Right lobe of liver (tissue), 6 donors: ENCODE measurements at regions of chr11 and their contacts with region 1.

Region 1: DNA sequence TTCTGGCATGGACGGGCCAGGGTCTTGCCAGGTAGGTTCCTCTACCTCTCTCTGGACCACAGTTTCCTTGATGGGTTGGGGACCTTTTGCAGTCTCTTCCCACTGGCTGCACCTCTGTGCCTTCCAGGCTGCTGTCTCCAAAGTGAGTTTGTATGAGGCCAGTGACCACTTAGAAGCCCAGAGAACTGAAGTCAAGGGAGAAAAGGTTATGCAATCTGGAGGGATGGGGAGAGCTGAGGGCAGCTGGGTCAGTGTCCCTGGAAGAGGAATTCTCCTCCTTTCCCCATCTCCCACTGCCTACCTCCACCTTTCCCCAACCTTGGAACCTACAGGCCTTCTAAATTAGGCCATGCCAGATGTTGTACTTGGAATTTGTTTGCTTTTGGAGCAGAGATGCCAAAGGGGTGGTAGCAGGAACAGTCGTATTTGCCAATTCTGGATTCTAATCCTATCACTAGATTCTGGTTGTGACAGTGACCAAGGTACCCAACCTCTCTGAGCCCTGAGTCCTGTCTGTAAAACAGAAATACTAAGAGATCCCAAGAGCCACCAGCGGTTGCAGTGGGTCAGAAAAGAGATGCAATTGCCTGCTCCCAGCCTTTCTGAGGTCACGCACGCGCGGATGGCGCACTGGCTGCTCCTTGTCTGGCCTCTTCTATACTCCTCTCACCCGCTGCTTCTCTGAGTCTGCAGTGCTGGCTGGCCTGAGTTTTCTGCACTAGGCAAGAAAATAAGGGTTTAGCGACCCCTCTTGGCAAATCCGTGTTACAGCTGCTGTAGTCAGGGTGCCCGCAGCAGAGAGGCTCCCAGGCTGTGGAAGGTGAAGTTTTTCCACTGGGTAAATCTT is 10.7 kb upstream of the ACCSL start:
- DNase-seq: peak; percentile 66 to 73 (median 67)
- ATAC-seq: peak; percentile 91 to 97 (median 94)
- H3K4me3 ChIP-seq: no peak overlapping the region
- H3K27ac ChIP-seq: no peak overlapping the region
- H3K4me1 ChIP-seq: peaks cover 0 to 8% (median 3%) of the 10 kb centered on the region in 4 donors
- H3K27me3 ChIP-seq: no peaks in the 10 kb centered on the region
- CTCF ChIP-seq: peak; percentile 63 to 79 (median 73)
- POLR2A ChIP-seq: no peak

Region 2: GRCh38 chr11:43680521-43681400 is 356.3 kb before region 1 on chr11 and contains the start of gene HSD17B12:
- intact Hi-C with region 1: no loop called
- DNase-seq: peak; percentile 99 to 100 (median 99)
- ATAC-seq: peak; percentile 98 to 100 (median 99)
- H3K4me3 ChIP-seq: peak within 1 kb of the TSS; percentile 74 to 87 (median 80)
- H3K27ac ChIP-seq: peak within 1 kb of the TSS; percentile 76 to 96 (median 93)
- H3K4me1 ChIP-seq: peaks cover 0 to 12% (median 7%) of the 10 kb centered on the region in 4 donors
- H3K27me3 ChIP-seq: no peaks in the 10 kb centered on the region
- CTCF ChIP-seq: peak in 1 of 4 donors; percentile 13
- POLR2A ChIP-seq: peak; percentile 97
- total RNA-seq, gene HSD17B12: 68.3 to 107 (median 93.2) TPM

Region 3: DNA sequence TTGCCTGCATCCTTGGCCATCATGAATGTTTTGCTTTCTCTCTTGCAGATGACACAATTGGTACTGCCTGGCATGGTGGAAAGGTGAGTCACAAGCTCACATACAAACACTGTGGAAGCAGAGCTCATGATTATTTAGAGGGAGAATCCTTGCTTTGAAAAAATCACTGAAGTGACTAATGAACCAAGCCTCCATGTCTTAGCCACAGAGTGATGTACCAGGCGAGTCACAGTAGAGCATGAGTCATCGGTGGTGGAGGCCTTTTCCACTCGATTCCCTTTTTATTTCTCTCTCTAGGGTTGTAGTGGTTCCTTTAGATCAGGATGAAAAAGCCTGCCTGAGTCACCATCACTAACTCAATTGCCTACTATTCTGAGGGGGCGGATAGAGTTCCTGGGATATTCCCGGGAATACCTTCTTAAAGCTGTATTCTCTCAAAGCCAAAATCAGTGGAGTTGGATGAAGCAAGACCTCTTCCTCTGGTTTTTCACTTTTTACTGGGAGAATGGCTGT is 206.1 kb before region 1 on chr11:
- intact Hi-C with region 1: no loop called
- DNase-seq: no peak
- ATAC-seq: peak in 1 of 4 donors; percentile 89
- H3K4me3 ChIP-seq: no peak overlapping the region
- H3K27ac ChIP-seq: no peak overlapping the region
- H3K4me1 ChIP-seq: no peaks in the 10 kb centered on the region
- H3K27me3 ChIP-seq: no peaks in the 10 kb centered on the region
- CTCF ChIP-seq: no peak
- POLR2A ChIP-seq: no peak

Region 4: GRCh38 chr11:43895601-43896000 is 141.4 kb before region 1 on chr11:
- intact Hi-C with region 1: loop called (anchors 5 to 10 kb)
- DNase-seq: no peak
- ATAC-seq: no peak
- H3K4me3 ChIP-seq: no peak overlapping the region
- H3K27ac ChIP-seq: no peak overlapping the region
- H3K4me1 ChIP-seq: no peaks in the 10 kb centered on the region
- H3K27me3 ChIP-seq: no peaks in the 10 kb centered on the region
- CTCF ChIP-seq: no peak
- POLR2A ChIP-seq: no peak

Region 5: DNA sequence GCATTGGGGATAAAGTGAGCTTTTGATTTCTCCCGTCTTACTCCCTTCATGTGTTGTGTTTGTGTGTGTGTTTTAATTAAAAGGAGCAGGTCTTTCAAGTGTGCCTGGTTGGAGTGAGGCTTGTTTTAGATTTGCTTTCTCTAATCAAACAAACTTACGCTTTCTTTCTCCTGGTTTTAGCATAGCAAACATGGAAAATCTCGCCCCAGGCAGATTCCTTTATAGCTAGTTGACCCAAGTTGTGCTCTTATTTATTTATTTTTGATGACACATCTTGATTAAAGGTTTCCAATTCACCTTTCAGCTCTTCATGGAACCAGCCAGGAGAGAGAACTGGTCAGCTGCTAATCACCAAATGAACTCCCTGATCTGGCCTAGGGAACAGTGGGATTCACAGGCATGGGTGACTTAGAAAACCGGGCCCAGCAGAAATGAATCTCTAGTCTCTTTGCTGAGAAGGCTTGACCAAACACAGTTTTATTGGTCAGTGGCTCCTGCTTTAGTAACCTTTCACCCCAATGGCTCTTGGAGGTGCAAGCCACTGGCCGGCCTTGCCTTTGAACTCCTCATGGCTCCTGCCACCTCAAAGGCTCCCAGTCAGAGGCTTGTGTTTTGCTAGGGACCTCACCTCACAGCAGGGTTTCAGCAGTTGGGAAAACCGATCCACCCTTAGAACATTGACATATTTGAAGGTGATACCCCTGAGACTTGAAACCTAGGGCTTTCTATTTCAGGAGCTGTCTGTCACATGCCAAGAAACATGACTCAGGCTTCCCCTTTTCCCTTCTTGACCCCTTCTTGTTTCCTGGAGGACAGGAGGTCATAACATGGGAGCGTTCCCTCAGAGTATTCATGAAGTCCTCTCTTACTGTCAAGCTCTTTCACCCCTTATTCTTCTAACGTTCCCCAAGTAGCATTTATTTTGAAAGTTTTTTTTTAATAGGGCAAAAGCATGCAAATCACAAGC is 107.2 kb after region 1 on chr11:
- intact Hi-C with region 1: no loop called
- DNase-seq: no peak
- ATAC-seq: peak in 2 of 4 donors; percentile 50 to 62
- H3K4me3 ChIP-seq: no peak overlapping the region
- H3K27ac ChIP-seq: no peak overlapping the region
- H3K4me1 ChIP-seq: no peaks in the 10 kb centered on the region
- H3K27me3 ChIP-seq: no peaks in the 10 kb centered on the region
- CTCF ChIP-seq: no peak
- POLR2A ChIP-seq: no peak